GM23248 (cell line): ENCODE measurements at regions of chr10 and their contacts with region 1.

Region 1: DNA sequence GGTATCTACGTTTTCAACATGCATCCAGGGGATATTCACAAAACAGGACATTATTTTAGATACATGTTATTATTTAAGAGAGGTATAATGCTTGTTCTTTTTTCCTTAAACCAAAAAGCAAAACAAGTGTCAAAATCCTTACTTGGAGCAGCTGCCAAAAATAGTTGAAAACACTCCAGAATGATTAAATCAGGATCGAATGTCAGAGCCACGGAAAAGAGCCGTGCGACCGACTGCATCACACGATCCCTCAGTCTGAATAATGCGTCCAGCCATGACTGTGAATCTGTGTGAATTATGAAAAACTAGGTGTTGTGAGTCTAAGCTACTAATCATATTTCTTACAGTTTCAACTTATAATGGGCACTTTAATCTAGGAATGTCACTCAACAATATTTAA is 126.0 kb downstream of the PARD3 start:
- DNase-seq: peak; percentile 83
- H3K4me3 ChIP-seq: peak overlapping the region; percentile 36
- H3K27ac ChIP-seq: no peak overlapping the region
- H3K4me1 ChIP-seq: peaks cover 9% of the 10 kb centered on the region
- H3K27me3 ChIP-seq: no peaks in the 10 kb centered on the region

Region 2: DNA sequence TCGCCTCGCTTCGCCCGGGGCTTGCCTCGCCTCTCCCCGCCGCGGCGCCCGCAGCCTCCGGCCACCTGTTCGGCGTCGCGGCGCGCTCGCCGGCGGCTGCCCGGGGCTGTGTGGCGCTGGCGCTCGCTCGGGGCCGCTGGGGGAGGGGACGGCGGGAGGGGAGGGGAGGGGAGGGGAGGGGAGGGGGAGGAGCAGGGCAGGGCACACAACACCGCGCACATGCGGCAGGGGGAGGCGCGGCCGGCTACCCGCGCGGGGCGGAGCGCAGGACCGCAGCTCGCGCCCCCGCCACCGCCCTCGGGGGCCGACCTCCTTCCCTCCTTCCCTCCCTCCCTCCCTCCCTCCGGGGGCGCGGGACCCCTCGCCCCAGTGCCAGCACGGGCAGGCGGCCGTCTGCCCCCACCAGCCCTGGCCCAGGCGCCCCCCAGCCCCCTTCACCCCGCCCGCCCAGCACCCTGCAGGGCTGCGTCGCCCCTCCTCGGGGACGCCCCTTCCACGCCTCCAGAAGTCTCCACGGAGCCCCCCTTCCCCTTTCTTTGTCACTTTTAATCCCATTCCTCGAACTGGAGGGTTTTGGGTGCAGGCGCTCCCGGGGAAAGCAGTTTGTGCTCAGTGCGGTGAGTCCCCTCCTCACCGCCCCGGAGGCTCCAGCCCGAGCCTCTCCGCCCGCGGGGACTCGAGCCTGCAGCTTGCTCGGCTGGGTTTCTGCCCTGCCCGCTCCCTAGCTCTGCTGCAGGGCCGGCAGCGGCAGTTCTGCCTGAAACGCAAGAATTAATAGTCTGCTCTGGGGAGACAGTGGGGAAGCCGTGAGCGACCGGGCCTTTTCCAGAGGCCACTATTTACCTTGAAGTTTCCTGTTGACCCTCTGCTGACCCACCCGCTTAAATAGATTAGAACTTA is 126.4 kb after region 1 on chr10 and contains the start of gene PARD3:
- in situ Hi-C with region 1: loop called (anchors 10 kb)
- DNase-seq: peak; percentile 74
- H3K4me3 ChIP-seq: peak within 1 kb of the TSS; percentile 79
- H3K27ac ChIP-seq: peak within 1 kb of the TSS; percentile 28
- H3K4me1 ChIP-seq: peaks cover 23% of the 10 kb centered on the region
- H3K27me3 ChIP-seq: no peaks in the 10 kb centered on the region
- total RNA-seq, gene PARD3: 21.2 and 30.9 TPM in 2 replicates